ENCODE measurements at regions of chr12 and their contacts with region 1.

Region 1: GRCh38 chr12:6778574-6779550 is 6.5 kb downstream of the LAG3 start:
- DNase-seq: peak; percentile 53
- H3K4me3 ChIP-seq: peak overlapping the region; percentile 54
- CTCF ChIP-seq: peak; percentile 98

Region 2: DNA sequence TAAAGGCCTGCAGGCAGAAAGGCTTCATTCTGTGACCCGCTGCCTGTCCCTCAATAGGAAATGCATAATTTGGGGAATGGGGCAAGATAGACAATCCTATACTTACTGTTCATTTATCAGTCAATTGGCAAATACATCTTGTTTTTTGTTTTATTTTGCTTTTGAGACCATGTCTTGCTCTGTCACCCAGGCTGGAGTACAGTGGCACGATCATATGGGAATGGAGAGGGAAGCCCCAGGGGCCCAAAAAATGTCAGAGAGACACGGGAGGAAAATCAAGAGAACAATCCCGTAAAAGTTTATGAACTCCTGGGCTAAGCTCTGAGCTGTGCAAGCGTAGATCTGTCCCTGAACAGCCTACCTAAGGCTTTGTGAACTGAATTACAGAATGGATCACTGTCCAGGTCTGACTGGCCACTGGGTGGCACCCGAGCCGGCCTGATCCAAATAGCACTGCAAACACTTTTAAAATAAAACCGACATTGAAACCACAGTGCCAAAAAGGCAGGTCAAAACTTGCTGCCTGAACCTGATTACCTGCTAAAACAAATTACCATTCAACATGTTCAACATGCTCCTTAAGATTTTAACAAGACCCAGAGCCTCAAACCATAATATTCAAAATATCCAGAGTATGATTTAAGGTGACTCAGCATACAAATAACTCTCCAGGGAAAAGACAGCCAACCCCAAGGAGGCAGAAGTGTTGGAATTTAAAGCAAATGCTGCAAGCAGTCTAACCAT is 43.2 kb before region 1 on chr12:
- CTCF ChIA-PET with region 1: interaction called, 13 read pairs
- POLR2A ChIA-PET with region 1: no interaction called
- DNase-seq: no peak
- H3K4me3 ChIP-seq: no peak overlapping the region
- CTCF ChIP-seq: peak; percentile 60

Region 3: GRCh38 chr12:6758506-6759095 is 20.3 kb before region 1 on chr12:
- CTCF ChIA-PET with region 1: interaction called, 272 read pairs
- POLR2A ChIA-PET with region 1: interaction called, 12 read pairs
- DNase-seq: no peak
- H3K4me3 ChIP-seq: no peak overlapping the region
- CTCF ChIP-seq: no peak

Region 4: DNA sequence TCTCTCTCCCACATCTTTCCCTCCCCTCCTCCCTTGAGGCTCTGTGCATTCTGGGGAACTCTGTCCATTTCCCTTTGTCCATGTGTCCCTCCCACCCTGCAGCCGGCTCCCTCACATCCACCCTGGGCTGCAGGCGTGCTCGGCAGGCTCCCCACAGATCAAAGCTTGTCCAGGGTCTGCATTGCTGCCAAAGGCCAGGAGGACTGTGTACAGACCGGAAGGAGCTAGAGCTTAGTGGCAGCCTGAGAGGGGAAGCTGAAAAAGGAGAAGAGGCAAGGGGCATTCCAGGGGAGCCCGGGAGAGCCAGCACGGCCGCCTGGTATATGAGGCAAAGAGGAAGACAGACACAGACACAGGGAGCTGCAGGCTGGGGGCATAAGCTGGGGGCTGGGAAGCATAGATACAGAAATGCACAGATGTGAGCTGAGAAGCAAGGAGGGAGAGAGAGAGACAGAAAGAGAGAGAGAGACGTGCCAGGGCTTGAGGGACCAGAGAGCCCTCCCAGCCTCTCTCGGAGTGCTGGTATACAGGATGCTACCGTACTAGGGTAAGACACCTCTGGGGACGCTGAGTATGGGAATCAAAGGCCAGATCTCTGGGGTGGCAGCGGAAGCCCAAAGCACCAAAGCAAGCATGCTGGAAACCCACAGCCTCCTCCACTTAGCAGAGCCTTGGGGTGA is 13.8 kb after region 1 on chr12:
- CTCF ChIA-PET with region 1: interaction called, 13 read pairs
- POLR2A ChIA-PET with region 1: no interaction called
- DNase-seq: no peak
- H3K4me3 ChIP-seq: peak overlapping the region; percentile 6; the same call in 1 of the 2 replicates
- CTCF ChIP-seq: no peak